Naive thymus-derived CD8-positive, alpha-beta T cell (primary cell): ENCODE measurements at regions of chr12 and their contacts with region 1.

Region 1: GRCh38 chr12:6335451-6336078 is 6.3 kb downstream of the TNFRSF1A start:
- DNase-seq: peak; percentile 64 to 93 (median 80)
- ATAC-seq: peak; percentile 74 to 80
- H3K4me3 Mint-ChIP-seq: no peak overlapping the region
- H3K27ac Mint-ChIP-seq: peak overlapping the region in 1 of 10 donors; percentile 81
- H3K4me1 Mint-ChIP-seq: peaks cover 36 to 59% (median 52%) of the 10 kb centered on the region in 4 donors
- H3K27me3 Mint-ChIP-seq: peaks cover 0 to 3% (median 0%) of the 10 kb centered on the region in 5 donors

Region 2: DNA sequence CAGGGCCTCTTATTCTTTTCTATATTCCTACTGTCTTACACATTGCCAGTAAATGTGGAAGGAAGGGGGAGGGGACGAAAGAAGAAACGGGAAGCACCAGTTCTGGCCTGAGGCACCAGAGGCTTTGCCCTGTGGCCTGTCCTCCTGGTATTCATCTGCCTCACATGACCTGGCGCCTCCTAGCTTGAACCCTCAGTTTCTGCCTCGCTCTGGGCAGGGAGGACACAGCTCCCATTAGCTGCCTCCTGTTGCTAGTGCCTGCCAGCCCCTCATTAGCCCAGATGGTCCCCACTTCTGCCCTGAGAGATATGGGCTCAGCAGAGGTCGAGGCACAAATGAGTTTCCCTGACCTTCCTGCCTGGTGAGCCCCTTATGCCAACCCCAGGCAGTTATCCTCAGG is 28.0 kb before region 1 on chr12:
- POLR2A ChIA-PET with region 1: no interaction called
- DNase-seq: no peak
- ATAC-seq: no peak
- H3K4me3 Mint-ChIP-seq: no peak overlapping the region
- H3K27ac Mint-ChIP-seq: no peak overlapping the region
- H3K4me1 Mint-ChIP-seq: peaks cover 0 to 2% (median 0%) of the 10 kb centered on the region in 4 donors
- H3K27me3 Mint-ChIP-seq: peaks cover 3 to 26% (median 13%) of the 10 kb centered on the region in 5 donors

Region 3: GRCh38 chr12:6323340-6323994 is 12.1 kb before region 1 on chr12:
- POLR2A ChIA-PET with region 1: interaction called, 31 read pairs
- DNase-seq: peak in 7 of 10 donors; percentile 26 to 61 (median 41)
- ATAC-seq: peak; percentile 82
- H3K4me3 Mint-ChIP-seq: peak overlapping the region; percentile 75 to 96 (median 84)
- H3K27ac Mint-ChIP-seq: peak overlapping the region; percentile 89 to 96 (median 92)
- H3K4me1 Mint-ChIP-seq: peaks cover 45 to 79% (median 69%) of the 10 kb centered on the region in 4 donors
- H3K27me3 Mint-ChIP-seq: peaks cover 0 to 10% (median 0%) of the 10 kb centered on the region in 5 donors

Region 4: GRCh38 chr12:6383572-6384498 is 48.3 kb after region 1 on chr12 and contains the start of gene LTBR:
- POLR2A ChIA-PET with region 1: interaction called, 12 read pairs
- DNase-seq: peak in 2 of 10 donors; percentile 9 to 18
- ATAC-seq: peak; percentile 10 to 71
- H3K4me3 Mint-ChIP-seq: peak within 1 kb of the TSS; percentile 9 to 77 (median 52)
- H3K27ac Mint-ChIP-seq: peak within 1 kb of the TSS in 5 of 10 donors; percentile 37 to 83 (median 71)
- H3K4me1 Mint-ChIP-seq: peaks cover 6 to 13% (median 9%) of the 10 kb centered on the region in 4 donors
- H3K27me3 Mint-ChIP-seq: peaks cover 6 to 17% (median 9%) of the 10 kb centered on the region in 5 donors
- polyA plus RNA-seq, gene LTBR: 0.23 TPM in 1 of 3 donors, not detected in the others

Region 5: GRCh38 chr12:6443361-6443983 is 107.9 kb after region 1 on chr12:
- POLR2A ChIA-PET with region 1: interaction called, 39 read pairs
- DNase-seq: no peak
- ATAC-seq: peak in 1 of 2 donors; percentile 27
- H3K4me3 Mint-ChIP-seq: peak overlapping the region; percentile 84 to 100 (median 99)
- H3K27ac Mint-ChIP-seq: peak overlapping the region; percentile 87 to 99 (median 96)
- H3K4me1 Mint-ChIP-seq: peaks cover 40 to 70% (median 60%) of the 10 kb centered on the region in 4 donors
- H3K27me3 Mint-ChIP-seq: no peaks in the 10 kb centered on the region

Region 6: GRCh38 chr12:6461401-6462233 is 126.1 kb after region 1 on chr12:
- POLR2A ChIA-PET with region 1: interaction called, 76 read pairs
- DNase-seq: peak; percentile 59 to 93 (median 83)
- ATAC-seq: peak; percentile 79 to 93
- H3K4me3 Mint-ChIP-seq: peak overlapping the region; percentile 67 to 89 (median 81)
- H3K27ac Mint-ChIP-seq: peak overlapping the region; percentile 94 to 100 (median 98)
- H3K4me1 Mint-ChIP-seq: peaks cover 63 to 94% (median 91%) of the 10 kb centered on the region in 4 donors
- H3K27me3 Mint-ChIP-seq: no peaks in the 10 kb centered on the region